ENCODE measurements at regions of chr7 and their contacts with region 1.

Region 1: GRCh38 chr7:77536413-77537135 is 521 bp upstream of the PTPN12 start:
- DNase-seq: peak; percentile 95
- ATAC-seq: peak; percentile 92
- H3K4me3 ChIP-seq: peak overlapping the region; percentile 90 to 100 (median 95)
- H3K27ac ChIP-seq: peak overlapping the region; percentile 95
- H3K4me1 ChIP-seq: peaks cover 42% of the 10 kb centered on the region
- H3K27me3 ChIP-seq: no peaks in the 10 kb centered on the region; a peak in 1 of 5 replicates
- CTCF ChIP-seq: peak; percentile 5; the same call in 1 of the 2 replicates
- EP300 ChIP-seq: no peak
- POLR2A ChIP-seq: peak; percentile 97
- RAD21 ChIP-seq: peak; percentile 39; the same call in 1 of the 2 replicates

Region 2: GRCh38 chr7:77269360-77270093 is 267.0 kb before region 1 on chr7:
- CTCF ChIA-PET with region 1: no interaction called
- POLR2A ChIA-PET with region 1: no interaction called
- in situ Hi-C with region 1: no loop called
- intact Hi-C with region 1: no loop called
- DNase-seq: no peak
- ATAC-seq: no peak
- H3K4me3 ChIP-seq: no peak overlapping the region
- H3K27ac ChIP-seq: no peak overlapping the region
- H3K4me1 ChIP-seq: peaks cover 13% of the 10 kb centered on the region; the same call in 1 of the 2 replicates
- H3K27me3 ChIP-seq: no peaks in the 10 kb centered on the region
- CTCF ChIP-seq: no peak
- EP300 ChIP-seq: no peak
- POLR2A ChIP-seq: no peak
- RAD21 ChIP-seq: no peak

Region 3: GRCh38 chr7:77415823-77416622 is 120.6 kb before region 1 on chr7 and contains the start of gene GSAP:
- CTCF ChIA-PET with region 1: no interaction called
- POLR2A ChIA-PET with region 1: interaction called, 28 read pairs
- in situ Hi-C with region 1: no loop called
- intact Hi-C with region 1: loop called (anchors 5 kb)
- DNase-seq: no peak
- ATAC-seq: peak; percentile 88
- H3K4me3 ChIP-seq: peak within 1 kb of the TSS; percentile 68 to 86 (median 81)
- H3K27ac ChIP-seq: peak within 1 kb of the TSS; percentile 94
- H3K4me1 ChIP-seq: peaks cover 71% of the 10 kb centered on the region
- H3K27me3 ChIP-seq: no peaks in the 10 kb centered on the region
- CTCF ChIP-seq: no peak
- EP300 ChIP-seq: 0 out of 4 replicates have a peak, but pooled peaks of 1 of the 2 experiments have one; percentile 5
- POLR2A ChIP-seq: peak; percentile 78 to 82
- RAD21 ChIP-seq: no peak; the same call in 1 of the 2 replicates
- total RNA-seq, gene GSAP: 15.6 and 34.6 TPM in 2 replicates

Region 4: GRCh38 chr7:77439572-77439971 is 97.0 kb before region 1 on chr7:
- CTCF ChIA-PET with region 1: no interaction called
- POLR2A ChIA-PET with region 1: no interaction called
- in situ Hi-C with region 1: no loop called
- intact Hi-C with region 1: loop called (anchors 1 kb)
- DNase-seq: peak; percentile 72
- ATAC-seq: peak; percentile 99
- H3K4me3 ChIP-seq: no peak overlapping the region
- H3K27ac ChIP-seq: no peak overlapping the region
- H3K4me1 ChIP-seq: peaks cover 32% of the 10 kb centered on the region
- H3K27me3 ChIP-seq: no peaks in the 10 kb centered on the region
- CTCF ChIP-seq: peak; percentile 86
- EP300 ChIP-seq: peak in 1 of 2 experiments; percentile 21; a peak in 1 of 4 replicates
- POLR2A ChIP-seq: no peak
- RAD21 ChIP-seq: peak; percentile 86

Region 5: DNA sequence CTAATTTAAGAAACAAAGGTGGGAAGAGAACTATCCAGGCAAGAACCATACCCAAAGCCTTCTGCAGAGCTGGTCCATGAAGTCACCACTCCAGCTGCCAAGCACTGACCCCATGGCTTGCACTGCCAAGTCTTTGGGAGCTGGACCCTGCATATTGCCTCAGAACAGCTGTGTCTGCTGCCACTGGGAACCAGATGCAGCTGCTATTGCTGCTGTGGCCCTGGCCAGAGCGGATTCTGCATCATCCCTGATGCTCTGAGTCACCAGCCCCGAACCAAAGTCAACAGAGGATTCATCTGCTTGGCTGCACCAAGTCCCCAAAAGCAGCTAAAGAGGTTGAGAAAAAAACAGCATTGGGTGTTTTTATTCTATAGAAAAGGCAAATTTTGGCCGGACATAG is 81.2 kb before region 1 on chr7:
- CTCF ChIA-PET with region 1: no interaction called
- POLR2A ChIA-PET with region 1: no interaction called
- in situ Hi-C with region 1: loop called (anchors 5 kb)
- intact Hi-C with region 1: loop called (anchors 1 kb)
- DNase-seq: peak; percentile 60
- ATAC-seq: peak; percentile 55
- H3K4me3 ChIP-seq: no peak overlapping the region
- H3K27ac ChIP-seq: no peak overlapping the region
- H3K4me1 ChIP-seq: peaks cover 71% of the 10 kb centered on the region
- H3K27me3 ChIP-seq: no peaks in the 10 kb centered on the region
- CTCF ChIP-seq: no peak
- EP300 ChIP-seq: no peak
- POLR2A ChIP-seq: no peak
- RAD21 ChIP-seq: no peak

Region 6: GRCh38 chr7:77479536-77480088 is 57.0 kb before region 1 on chr7:
- CTCF ChIA-PET with region 1: no interaction called
- POLR2A ChIA-PET with region 1: interaction called, 7 read pairs
- in situ Hi-C with region 1: no loop called
- intact Hi-C with region 1: loop called (anchors 5 kb)
- DNase-seq: peak; percentile 94
- ATAC-seq: peak; percentile 96
- H3K4me3 ChIP-seq: peak overlapping the region in 2 of 3 experiments; percentile 9 to 24; a peak in 3 of 6 replicates
- H3K27ac ChIP-seq: peak overlapping the region; percentile 64
- H3K4me1 ChIP-seq: peaks cover 66% of the 10 kb centered on the region
- H3K27me3 ChIP-seq: no peaks in the 10 kb centered on the region
- CTCF ChIP-seq: no peak
- EP300 ChIP-seq: peak in 1 of 2 experiments; percentile 62; a peak in 2 of 4 replicates
- POLR2A ChIP-seq: 0 out of 4 replicates have a peak, but pooled peaks of 1 of the 2 experiments have one; percentile 34
- RAD21 ChIP-seq: no peak